MCF 10A (cell line): ENCODE measurements at regions of chr1 and their contacts with region 1.

Region 1: DNA sequence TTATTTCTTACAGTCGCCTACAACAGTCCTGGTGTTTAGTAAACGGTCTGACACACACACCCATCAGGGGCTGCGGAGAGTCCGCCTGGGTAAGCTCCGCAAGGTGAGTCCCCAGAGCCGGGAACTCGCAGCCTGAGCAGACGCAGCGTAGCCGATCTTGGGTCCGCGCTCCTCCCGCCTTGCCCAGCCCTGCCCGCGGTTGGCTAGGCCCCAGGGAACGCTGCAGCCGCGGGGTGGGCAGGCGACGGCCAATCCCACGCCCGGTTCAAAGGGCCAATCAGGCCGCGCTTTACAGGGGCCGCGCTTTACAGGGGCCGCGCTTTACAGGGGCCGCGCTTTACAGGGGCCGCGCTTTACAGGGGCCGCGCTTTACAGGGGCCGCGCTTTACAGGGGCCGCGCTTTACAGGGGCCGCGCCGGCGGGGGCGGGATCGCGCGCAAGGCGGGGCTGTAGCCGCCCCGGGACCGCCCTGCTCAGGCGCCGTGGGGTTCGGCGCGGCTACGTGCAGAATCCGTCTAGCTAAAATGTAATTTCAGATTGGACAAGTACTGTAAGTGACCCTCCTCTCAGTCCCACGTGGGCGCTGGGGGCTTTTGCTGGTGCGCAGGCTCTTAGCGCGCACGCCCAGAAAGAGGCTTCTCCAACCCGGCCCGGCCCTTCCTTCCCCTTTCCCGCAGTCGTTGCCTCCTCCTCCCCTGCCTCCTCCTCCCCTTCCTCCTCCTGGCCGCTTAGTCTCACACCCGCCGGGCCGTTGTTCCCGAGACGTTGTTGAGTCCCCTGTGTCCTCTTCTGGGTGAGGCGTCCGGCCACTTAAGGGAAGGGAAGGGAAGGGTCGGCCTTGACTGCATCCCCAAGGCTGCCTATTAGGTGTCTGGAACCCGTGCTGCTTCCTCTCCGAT is at the start of gene FGGY:
- DNase-seq: peak; percentile 97
- H3K4me3 Mint-ChIP-seq: peak within 1 kb of the TSS; percentile 89
- H3K27ac Mint-ChIP-seq: peak within 1 kb of the TSS; percentile 87
- H3K4me1 Mint-ChIP-seq: peaks cover 19% of the 10 kb centered on the region
- H3K27me3 Mint-ChIP-seq: no peaks in the 10 kb centered on the region
- CTCF ChIP-seq: no peak
- total RNA-seq, gene FGGY: 8.0 and 10.6 TPM in 2 replicates

Region 2: DNA sequence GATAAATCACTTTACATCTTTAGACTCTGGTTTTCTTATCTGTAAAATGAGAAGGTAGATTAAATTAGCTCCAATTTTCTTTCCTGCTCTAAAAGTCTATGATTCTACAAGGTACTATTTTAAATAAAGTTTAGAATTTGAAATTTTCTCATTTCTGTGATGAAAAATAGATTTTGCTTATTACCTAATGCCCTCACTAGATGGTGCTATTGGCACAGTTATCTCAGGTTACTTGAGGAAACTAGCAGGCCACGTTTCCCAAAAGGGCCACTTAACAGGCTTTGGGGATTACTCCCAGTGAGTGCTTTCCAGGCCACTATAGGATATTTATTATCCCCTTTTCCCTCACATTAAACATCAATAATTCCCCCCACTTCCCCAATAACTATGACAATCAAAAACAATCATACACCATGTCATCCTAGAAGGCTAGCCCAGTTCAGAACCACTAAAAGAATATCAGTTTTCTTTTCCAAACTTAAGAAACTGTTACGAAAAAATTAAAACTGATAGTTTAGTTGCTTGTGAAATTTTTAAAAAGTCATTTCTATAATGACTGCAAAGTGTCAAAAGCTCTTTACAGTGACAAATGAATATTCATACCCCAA is 780.7 kb before region 1 on chr1:
- CTCF ChIA-PET with region 1: no interaction called
- POLR2A ChIA-PET with region 1: no interaction called
- intact Hi-C with region 1: loop called (anchors 10 kb)
- DNase-seq: peak; percentile 79
- H3K4me3 Mint-ChIP-seq: no peak overlapping the region
- H3K27ac Mint-ChIP-seq: no peak overlapping the region
- H3K4me1 Mint-ChIP-seq: no peaks in the 10 kb centered on the region
- H3K27me3 Mint-ChIP-seq: no peaks in the 10 kb centered on the region
- CTCF ChIP-seq: peak; percentile 60

Region 3: DNA sequence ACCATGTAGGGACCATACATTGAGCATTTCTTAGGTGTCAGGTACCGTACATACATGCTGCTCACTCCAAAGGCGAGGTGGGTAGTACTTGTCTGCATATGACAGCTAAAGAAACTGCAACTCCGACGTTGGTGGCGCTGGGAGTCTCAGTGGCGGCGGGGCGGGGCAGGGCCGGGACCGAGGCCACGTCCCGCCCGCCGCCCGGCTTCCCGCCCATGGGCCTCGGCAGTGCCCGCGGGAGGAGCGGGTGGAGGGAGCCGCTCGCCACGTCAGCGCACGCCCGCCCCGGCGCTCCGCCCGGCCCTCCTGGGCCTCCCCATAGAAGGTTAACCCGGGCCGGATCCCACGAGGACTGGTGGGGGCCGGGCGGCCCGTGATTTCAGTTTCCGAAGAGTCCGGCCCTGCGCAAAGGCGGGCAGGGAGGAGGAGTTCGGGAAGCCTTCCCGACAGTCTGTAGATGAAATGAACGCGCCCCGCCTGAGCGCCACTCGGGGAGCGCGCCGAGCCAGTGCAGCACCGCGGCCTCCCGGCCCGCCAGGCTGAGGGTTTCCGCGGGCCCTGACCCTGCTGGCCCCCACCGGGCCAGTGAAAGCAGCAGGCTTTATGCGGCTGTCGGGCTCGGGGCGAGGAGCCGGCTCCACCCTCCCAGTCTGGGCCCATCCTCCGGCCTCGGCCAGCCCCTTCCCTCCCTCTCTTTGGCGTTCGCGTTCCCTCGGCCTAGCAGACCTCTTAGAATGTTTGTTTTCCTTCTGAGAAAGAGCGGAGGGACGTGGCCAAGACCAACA is 392.9 kb before region 1 on chr1:
- CTCF ChIA-PET with region 1: no interaction called
- POLR2A ChIA-PET with region 1: no interaction called
- intact Hi-C with region 1: loop called (anchors 10 kb)
- DNase-seq: peak; percentile 82
- H3K4me3 Mint-ChIP-seq: peak overlapping the region; percentile 72
- H3K27ac Mint-ChIP-seq: peak overlapping the region; percentile 68
- H3K4me1 Mint-ChIP-seq: peaks cover 13% of the 10 kb centered on the region
- H3K27me3 Mint-ChIP-seq: no peaks in the 10 kb centered on the region
- CTCF ChIP-seq: no peak

Region 4: GRCh38 chr1:59150577-59151391 is 145.8 kb before region 1 on chr1:
- CTCF ChIA-PET with region 1: interaction called, 3 read pairs
- POLR2A ChIA-PET with region 1: interaction called, 5 read pairs
- intact Hi-C with region 1: loop called (anchors 10 kb)
- DNase-seq: peak; percentile 96
- H3K4me3 Mint-ChIP-seq: peak overlapping the region; percentile 65
- H3K27ac Mint-ChIP-seq: peak overlapping the region; percentile 86
- H3K4me1 Mint-ChIP-seq: peaks cover 22% of the 10 kb centered on the region
- H3K27me3 Mint-ChIP-seq: no peaks in the 10 kb centered on the region
- CTCF ChIP-seq: no peak

Region 5: GRCh38 chr1:59367301-59368007 is 70.8 kb after region 1 on chr1:
- CTCF ChIA-PET with region 1: interaction called, 3 read pairs
- POLR2A ChIA-PET with region 1: interaction called, 10 read pairs
- intact Hi-C with region 1: loop called (anchors 10 kb)
- DNase-seq: peak; percentile 75
- H3K4me3 Mint-ChIP-seq: peak overlapping the region; percentile 35
- H3K27ac Mint-ChIP-seq: peak overlapping the region; percentile 86
- H3K4me1 Mint-ChIP-seq: peaks cover 42% of the 10 kb centered on the region
- H3K27me3 Mint-ChIP-seq: no peaks in the 10 kb centered on the region
- CTCF ChIP-seq: no peak

Region 6: GRCh38 chr1:59570524-59570923 is 273.9 kb after region 1 on chr1:
- CTCF ChIA-PET with region 1: no interaction called
- POLR2A ChIA-PET with region 1: no interaction called
- intact Hi-C with region 1: loop called (anchors 5 kb)
- DNase-seq: no peak
- H3K4me3 Mint-ChIP-seq: no peak overlapping the region
- H3K27ac Mint-ChIP-seq: no peak overlapping the region
- H3K4me1 Mint-ChIP-seq: peaks cover 5% of the 10 kb centered on the region
- H3K27me3 Mint-ChIP-seq: no peaks in the 10 kb centered on the region
- CTCF ChIP-seq: no peak

Region 7: GRCh38 chr1:59699227-59699847 is 402.7 kb after region 1 on chr1:
- CTCF ChIA-PET with region 1: interaction called, 3 read pairs
- POLR2A ChIA-PET with region 1: interaction called, 8 read pairs
- intact Hi-C with region 1: loop called (anchors 5 kb)
- DNase-seq: peak; percentile 59
- H3K4me3 Mint-ChIP-seq: no peak overlapping the region
- H3K27ac Mint-ChIP-seq: peak overlapping the region; percentile 57
- H3K4me1 Mint-ChIP-seq: peaks cover 24% of the 10 kb centered on the region
- H3K27me3 Mint-ChIP-seq: no peaks in the 10 kb centered on the region
- CTCF ChIP-seq: peak; percentile 76